Esophagus muscularis mucosa (tissue), 4 donors: ENCODE measurements at regions of chr7 and their contacts with region 1.

Region 1: DNA sequence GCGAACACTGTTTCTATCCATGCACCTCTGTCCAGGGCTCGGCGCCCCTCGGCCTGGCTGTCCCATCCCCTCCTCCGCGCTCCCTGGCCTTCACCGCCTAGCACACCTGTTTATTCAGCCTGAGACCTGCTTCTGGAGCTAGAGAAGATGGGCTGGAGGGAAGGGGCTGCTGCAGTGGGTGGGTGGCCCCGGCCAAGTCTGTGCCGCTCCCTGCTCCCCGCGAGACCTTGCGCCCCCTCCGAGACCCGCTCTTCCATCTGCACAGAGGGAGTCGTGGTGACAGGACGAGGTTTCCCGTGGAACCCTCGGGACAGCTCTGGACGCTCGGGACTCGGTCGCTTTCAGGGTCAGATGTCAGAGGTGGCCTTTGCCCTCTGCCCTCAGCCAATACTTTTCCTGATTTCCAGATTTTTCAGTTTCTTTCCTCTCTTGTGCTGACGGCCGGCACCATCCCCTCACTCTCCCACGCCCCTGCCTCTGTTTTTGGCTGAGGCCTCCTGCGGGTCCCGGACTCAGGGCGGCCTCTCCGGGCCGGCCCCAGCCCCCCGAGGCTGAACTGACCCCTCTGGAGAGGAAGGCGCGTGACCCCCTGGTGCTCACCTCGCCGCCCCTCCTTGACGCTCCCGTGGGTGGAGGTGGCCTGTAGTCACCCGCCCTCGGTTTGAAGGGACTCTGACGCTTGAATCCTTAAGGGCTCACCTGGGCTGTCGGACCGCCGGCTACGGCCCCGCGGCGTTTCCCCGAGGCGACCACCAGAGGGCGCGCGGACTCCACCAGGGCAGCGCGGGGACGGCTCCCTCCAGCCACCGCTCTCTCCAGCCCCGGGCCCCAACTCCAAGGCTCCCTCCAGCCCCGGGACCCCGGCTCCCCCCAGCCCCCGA is 15.6 kb downstream of the SHH start:
- DNase-seq: no peak
- H3K4me3 ChIP-seq: peak overlapping the region in 1 of 4 donors; percentile 7
- H3K27ac ChIP-seq: no peak overlapping the region
- H3K4me1 ChIP-seq: peaks cover 8 to 10% (median 9%) of the 10 kb centered on the region in 4 donors
- H3K27me3 ChIP-seq: peaks cover 0 to 65% (median 18%) of the 10 kb centered on the region in 4 donors
- CTCF ChIP-seq: peak in 2 of 3 experiments; percentile 62 to 86
- EP300 ChIP-seq: no peak
- POLR2A ChIP-seq: no peak

Region 2: GRCh38 chr7:155724327-155725005 is 72.2 kb before region 1 on chr7:
- intact Hi-C with region 1: no loop called
- DNase-seq: no peak
- H3K4me3 ChIP-seq: no peak overlapping the region
- H3K27ac ChIP-seq: no peak overlapping the region
- H3K4me1 ChIP-seq: peaks cover 0 to 9% (median 4%) of the 10 kb centered on the region in 4 donors
- H3K27me3 ChIP-seq: no peaks in the 10 kb centered on the region
- CTCF ChIP-seq: no peak
- EP300 ChIP-seq: no peak
- POLR2A ChIP-seq: no peak

Region 3: GRCh38 chr7:156473476-156474240 is 677.0 kb after region 1 on chr7:
- intact Hi-C with region 1: loop called (anchors 5 kb)
- DNase-seq: no peak
- H3K4me3 ChIP-seq: no peak overlapping the region
- H3K27ac ChIP-seq: no peak overlapping the region
- H3K4me1 ChIP-seq: peaks cover 0 to 13% (median 5%) of the 10 kb centered on the region in 4 donors
- H3K27me3 ChIP-seq: peaks cover 0 to 11% (median 0%) of the 10 kb centered on the region in 4 donors
- CTCF ChIP-seq: peak; percentile 39 to 62 (median 51)
- EP300 ChIP-seq: no peak
- POLR2A ChIP-seq: no peak

Region 4: GRCh38 chr7:156816943-156817572 is 1020.4 kb after region 1 on chr7:
- intact Hi-C with region 1: loop called (anchors 10 kb)
- DNase-seq: no peak
- H3K4me3 ChIP-seq: no peak overlapping the region
- H3K27ac ChIP-seq: no peak overlapping the region
- H3K4me1 ChIP-seq: no peaks in the 10 kb centered on the region
- H3K27me3 ChIP-seq: no peaks in the 10 kb centered on the region
- CTCF ChIP-seq: peak in 2 of 3 experiments; percentile 15 to 21
- EP300 ChIP-seq: no peak
- POLR2A ChIP-seq: no peak